Mammary epithelial cell (primary cell): ENCODE measurements at regions of chr11 and their contacts with region 1.

Region 1: DNA sequence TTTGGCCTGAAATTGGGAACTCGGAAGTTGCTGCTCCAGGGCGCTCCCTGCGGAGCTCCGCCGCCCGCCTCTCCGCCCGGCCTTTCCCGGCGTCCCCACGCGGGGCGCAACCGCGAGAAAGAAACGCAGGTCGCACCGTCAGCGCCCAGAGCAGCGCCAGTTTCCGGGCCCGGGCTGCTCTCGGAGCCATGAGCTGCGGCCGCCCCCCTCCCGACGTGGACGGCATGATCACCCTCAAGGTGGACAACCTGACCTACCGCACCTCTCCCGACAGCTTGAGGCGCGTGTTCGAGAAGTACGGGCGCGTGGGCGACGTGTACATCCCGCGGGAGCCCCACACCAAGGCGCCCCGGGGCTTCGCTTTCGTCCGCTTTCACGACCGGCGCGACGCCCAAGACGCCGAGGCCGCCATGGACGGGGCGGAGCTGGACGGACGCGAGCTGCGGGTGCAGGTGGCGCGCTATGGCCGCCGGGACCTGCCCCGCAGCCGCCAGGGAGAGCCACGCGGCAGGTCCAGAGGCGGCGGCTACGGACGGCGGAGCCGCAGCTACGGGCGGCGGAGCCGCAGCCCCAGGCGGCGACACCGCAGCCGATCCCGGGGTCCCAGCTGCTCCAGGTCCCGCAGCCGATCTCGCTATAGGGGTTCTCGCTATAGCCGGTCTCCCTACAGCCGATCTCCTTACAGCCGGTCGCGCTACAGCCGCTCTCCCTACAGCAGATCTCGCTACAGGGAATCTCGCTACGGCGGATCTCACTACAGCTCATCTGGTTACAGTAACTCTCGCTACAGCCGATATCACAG is 521 bp downstream of the SRSF8 start:
- DNase-seq: peak; percentile 74
- H3K4me3 ChIP-seq: peak overlapping the region; percentile 86 to 99 (median 96)
- H3K27ac ChIP-seq: peak overlapping the region; percentile 90
- H3K4me1 ChIP-seq: peaks cover 30% of the 10 kb centered on the region
- H3K27me3 ChIP-seq: no peaks in the 10 kb centered on the region
- CTCF ChIP-seq: peak; percentile 10 to 62

Region 2: GRCh38 chr11:94623120-94623735 is 444.0 kb before region 1 on chr11:
- CTCF ChIA-PET with region 1: no interaction called
- dilution Hi-C with region 1: no loop called
- in situ Hi-C with region 1: no loop called
- intact Hi-C with region 1: loop called (anchors 2 kb)
- DNase-seq: peak; percentile 70
- H3K4me3 ChIP-seq: no peak overlapping the region
- H3K27ac ChIP-seq: no peak overlapping the region
- H3K4me1 ChIP-seq: no peaks in the 10 kb centered on the region
- H3K27me3 ChIP-seq: no peaks in the 10 kb centered on the region
- CTCF ChIP-seq: peak; percentile 91 to 94

Region 3: DNA sequence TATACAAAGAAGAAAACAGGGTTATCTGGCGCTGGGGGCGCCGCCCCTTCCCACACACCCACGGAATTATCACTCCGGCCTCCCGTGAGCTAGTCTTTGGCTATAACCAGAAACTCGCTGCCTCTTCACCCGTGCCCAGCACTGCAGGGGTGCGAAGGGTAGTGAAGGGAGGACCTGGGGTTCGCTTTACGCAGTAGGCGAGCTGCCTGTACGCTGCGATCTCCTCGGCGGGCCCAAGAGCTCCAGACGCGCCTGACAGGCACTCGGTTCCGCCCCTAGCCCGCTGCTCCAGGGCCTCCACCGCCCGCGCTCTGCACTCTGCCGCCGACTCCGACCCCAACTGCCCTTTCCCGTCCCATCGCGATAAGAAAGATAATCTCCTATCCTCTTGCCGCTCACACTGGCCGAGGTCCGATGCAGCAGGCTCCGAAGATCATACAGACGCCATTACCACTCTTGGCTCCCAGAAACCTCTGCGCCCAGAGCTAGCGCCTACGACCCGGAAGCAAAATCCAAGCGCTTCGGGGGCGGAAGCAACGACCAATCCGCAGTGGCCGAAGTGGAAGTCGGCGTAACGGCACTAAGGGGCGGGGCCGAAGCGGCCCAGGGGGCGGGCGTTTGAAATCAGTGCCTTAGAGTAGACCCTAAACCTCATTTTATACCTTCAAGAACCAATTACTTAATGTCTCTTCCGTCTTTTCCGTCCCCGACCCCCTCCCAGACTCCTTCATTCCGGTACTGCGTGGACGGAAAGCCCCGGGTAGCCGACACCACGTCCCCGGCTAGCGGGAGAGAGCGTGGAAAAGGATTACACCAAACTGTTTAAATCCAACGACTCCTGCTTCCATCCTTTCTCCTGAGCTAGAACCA is 93.9 kb before region 1 on chr11 and contains the starts of genes CWC15 and KDM4D:
- CTCF ChIA-PET with region 1: interaction called, 3 read pairs
- dilution Hi-C with region 1: no loop called
- in situ Hi-C with region 1: loop called in 1 of 2 experiments (anchors 5 kb)
- intact Hi-C with region 1: loop called (anchors 1 kb)
- DNase-seq: peak; percentile 90
- H3K4me3 ChIP-seq: peak within 1 kb of the TSS; percentile 86 to 99 (median 89)
- H3K27ac ChIP-seq: peak within 1 kb of the TSS; percentile 80
- H3K4me1 ChIP-seq: peaks cover 9% of the 10 kb centered on the region
- H3K27me3 ChIP-seq: no peaks in the 10 kb centered on the region
- CTCF ChIP-seq: no peak
- total RNA-seq, gene CWC15: 27.5 to 46.5 TPM
- total RNA-seq, gene KDM4D: 1.0 TPM

Region 4: DNA sequence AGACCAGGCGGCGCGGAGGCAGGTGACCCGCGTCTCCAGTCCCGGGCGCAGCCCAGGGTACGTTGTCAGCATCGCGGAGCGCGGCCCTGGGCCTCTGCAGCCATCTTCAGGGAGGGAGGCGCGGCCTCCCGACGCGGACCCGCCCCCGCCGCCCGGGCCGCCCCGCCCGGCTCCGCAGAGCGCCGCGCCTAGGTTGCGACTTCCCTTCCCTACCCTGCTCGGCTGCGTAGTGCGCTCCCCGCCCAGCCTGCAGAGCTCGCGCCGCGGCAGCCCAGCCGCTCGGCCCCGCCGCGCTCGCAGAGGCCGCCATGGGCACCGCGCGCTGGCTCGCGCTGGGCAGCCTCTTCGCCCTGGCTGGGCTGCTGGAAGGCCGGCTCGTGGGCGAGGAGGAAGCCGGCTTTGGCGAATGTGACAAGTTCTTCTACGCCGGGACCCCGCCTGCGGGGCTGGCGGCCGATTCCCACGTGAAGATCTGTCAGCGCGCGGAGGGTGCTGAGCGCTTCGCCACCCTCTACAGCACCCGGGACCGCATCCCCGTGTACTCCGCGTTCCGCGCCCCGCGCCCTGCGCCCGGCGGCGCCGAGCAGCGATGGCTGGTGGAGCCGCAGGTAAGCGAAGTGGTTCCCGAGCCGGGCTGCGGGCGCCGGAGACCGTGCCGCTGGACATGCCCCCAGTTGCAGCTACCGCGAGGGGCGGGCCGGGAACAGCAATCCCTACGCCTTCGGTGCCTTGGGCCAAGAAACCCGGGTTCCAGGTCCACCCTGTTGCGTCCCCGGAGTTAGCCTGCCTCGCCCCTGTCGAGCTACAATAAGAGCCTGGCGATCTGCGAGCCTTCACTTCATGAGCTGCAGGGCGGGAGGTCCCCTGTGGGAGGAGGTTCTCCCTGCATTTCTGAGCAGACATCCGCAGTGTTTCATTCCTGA is 22.6 kb after region 1 on chr11 and contains the start of gene ENDOD1:
- CTCF ChIA-PET with region 1: interaction called, 3 read pairs
- dilution Hi-C with region 1: no loop called
- in situ Hi-C with region 1: no loop called
- intact Hi-C with region 1: loop called (anchors 1 kb)
- DNase-seq: peak; percentile 83
- H3K4me3 ChIP-seq: peak within 1 kb of the TSS; percentile 75 to 87 (median 80)
- H3K27ac ChIP-seq: peak within 1 kb of the TSS; percentile 69
- H3K4me1 ChIP-seq: peaks cover 48% of the 10 kb centered on the region
- H3K27me3 ChIP-seq: no peaks in the 10 kb centered on the region
- CTCF ChIP-seq: peak in 1 of 2 donors; percentile 8
- total RNA-seq, gene ENDOD1: 47.9 to 206 TPM

Region 5: GRCh38 chr11:95134491-95134890 is 67.3 kb after region 1 on chr11:
- CTCF ChIA-PET with region 1: no interaction called
- dilution Hi-C with region 1: no loop called
- in situ Hi-C with region 1: no loop called
- intact Hi-C with region 1: loop called (anchors 1 kb)
- DNase-seq: peak; percentile 99
- H3K4me3 ChIP-seq: no peak overlapping the region
- H3K27ac ChIP-seq: peak overlapping the region; percentile 82
- H3K4me1 ChIP-seq: peaks cover 31% of the 10 kb centered on the region
- H3K27me3 ChIP-seq: no peaks in the 10 kb centered on the region
- CTCF ChIP-seq: no peak

Region 6: GRCh38 chr11:95705485-95706124 is 638.4 kb after region 1 on chr11:
- CTCF ChIA-PET with region 1: no interaction called
- dilution Hi-C with region 1: no loop called
- in situ Hi-C with region 1: no loop called
- intact Hi-C with region 1: loop called (anchors 1 kb)
- DNase-seq: peak; percentile 78
- H3K4me3 ChIP-seq: no peak overlapping the region
- H3K27ac ChIP-seq: no peak overlapping the region
- H3K4me1 ChIP-seq: peaks cover 3% of the 10 kb centered on the region
- H3K27me3 ChIP-seq: no peaks in the 10 kb centered on the region
- CTCF ChIP-seq: peak; percentile 99